GM12878 (cell line): ENCODE measurements at regions of chr20 and their contacts with region 1.

Region 1: GRCh38 chr20:41038878-41039404 is 10.3 kb downstream of the TOP1 start:
- DNase-seq: no peak
- ATAC-seq: peak; percentile 90
- H3K4me3 ChIP-seq: no peak overlapping the region
- H3K27ac ChIP-seq: 0 out of 2 replicates have a peak overlapping the region, but pooled peaks have one; percentile 23
- H3K4me1 ChIP-seq: no peaks in the 10 kb centered on the region
- H3K27me3 ChIP-seq: no peaks in the 10 kb centered on the region
- CTCF ChIP-seq: no peak
- EP300 ChIP-seq: peak; percentile 31 to 77; a peak in 3 of 4 replicates
- POLR2A ChIP-seq: no peak
- RAD21 ChIP-seq: no peak

Region 2: DNA sequence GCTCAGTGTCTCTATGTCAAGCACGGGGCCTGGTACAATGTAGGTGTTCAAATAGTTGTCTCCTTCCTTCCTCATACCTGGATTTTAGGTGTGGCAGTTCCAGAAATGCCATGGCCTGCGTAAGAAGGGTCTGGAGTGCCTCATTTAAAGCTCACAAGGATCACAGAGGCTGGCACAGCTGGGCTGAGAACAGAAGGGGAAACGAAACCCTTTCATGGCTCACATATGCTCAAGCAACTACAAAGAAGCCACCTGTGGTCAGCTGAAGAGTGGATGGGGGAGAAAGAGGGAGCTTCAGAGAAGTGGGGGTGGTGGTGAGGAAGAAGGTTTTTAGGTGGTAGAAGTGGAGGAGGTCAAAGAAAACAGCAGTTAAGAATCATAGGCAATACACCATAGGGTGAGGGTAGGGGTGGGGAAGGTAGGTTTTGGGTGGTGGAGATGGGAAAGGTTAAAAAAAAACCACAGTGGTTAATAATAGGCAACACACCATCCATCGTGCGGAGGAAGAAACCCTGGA is 27.3 kb before region 1 on chr20:
- CTCF ChIA-PET with region 1: interaction called, 9 read pairs
- POLR2A ChIA-PET with region 1: interaction called, 9 read pairs
- RAD21 ChIA-PET with region 1: interaction called, 10 read pairs
- SMC1A ChIA-PET with region 1: interaction called, 104 read pairs
- in situ Hi-C with region 1: no loop called
- intact Hi-C with region 1: no loop called
- DNase-seq: peak; percentile 95
- ATAC-seq: peak; percentile 95
- H3K4me3 ChIP-seq: peak overlapping the region; percentile 38
- H3K27ac ChIP-seq: peak overlapping the region; percentile 91
- H3K4me1 ChIP-seq: peaks cover 44% of the 10 kb centered on the region
- H3K27me3 ChIP-seq: no peaks in the 10 kb centered on the region
- CTCF ChIP-seq: no peak
- EP300 ChIP-seq: peak; percentile 83 to 88
- POLR2A ChIP-seq: no peak
- RAD21 ChIP-seq: peak; percentile 30; the same call in 1 of the 2 replicates

Region 3: DNA sequence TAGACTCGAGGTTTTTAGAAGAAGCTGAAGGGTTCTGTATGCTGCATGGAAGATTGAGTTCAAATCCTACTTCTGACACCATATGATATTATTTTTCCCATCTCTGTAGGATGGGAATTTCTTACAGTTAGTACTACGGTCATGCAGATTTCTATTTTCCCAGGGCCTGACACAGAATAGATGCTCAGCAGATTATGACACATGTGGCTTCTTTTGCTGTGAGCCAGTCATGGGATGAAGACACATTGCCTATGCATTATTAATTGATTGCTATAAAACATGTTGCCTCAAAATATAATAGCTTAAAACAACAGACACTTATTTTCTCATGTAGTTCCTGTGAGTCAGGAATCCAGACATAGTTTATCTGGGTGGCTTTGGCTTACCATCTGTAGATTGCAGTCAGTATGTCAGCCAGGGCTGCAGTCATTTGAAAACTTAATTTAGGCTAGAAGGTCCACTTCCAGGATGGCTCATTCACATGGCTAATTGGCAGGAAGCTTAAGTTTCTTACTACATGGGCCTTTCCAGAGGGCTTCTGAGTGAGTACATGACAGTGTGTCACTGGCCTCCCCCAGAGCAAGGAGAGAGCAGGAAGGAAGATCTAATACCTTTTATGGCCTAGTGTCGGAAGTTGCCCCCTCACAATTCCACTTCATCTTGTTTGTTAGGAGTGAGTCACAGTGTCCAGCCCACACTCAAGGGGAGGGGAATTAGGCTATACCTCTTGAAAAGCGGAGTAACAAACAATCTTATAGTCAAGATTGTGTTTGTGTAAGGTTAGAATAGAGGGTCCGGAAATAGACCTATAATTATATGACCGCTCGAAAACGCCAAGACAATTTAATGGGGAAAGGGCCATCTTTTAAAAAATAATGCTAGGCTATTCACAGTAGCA is 19.3 kb after region 1 on chr20:
- CTCF ChIA-PET with region 1: interaction called, 53 read pairs
- POLR2A ChIA-PET with region 1: interaction called, 66 read pairs
- RAD21 ChIA-PET with region 1: interaction called, 14 read pairs
- SMC1A ChIA-PET with region 1: interaction called, 86 read pairs
- in situ Hi-C with region 1: no loop called
- intact Hi-C with region 1: no loop called
- DNase-seq: no peak
- ATAC-seq: peak; percentile 76
- H3K4me3 ChIP-seq: no peak overlapping the region
- H3K27ac ChIP-seq: no peak overlapping the region
- H3K4me1 ChIP-seq: peaks cover 8% of the 10 kb centered on the region
- H3K27me3 ChIP-seq: no peaks in the 10 kb centered on the region
- CTCF ChIP-seq: no peak
- EP300 ChIP-seq: no peak
- POLR2A ChIP-seq: no peak
- RAD21 ChIP-seq: no peak

Region 4: DNA sequence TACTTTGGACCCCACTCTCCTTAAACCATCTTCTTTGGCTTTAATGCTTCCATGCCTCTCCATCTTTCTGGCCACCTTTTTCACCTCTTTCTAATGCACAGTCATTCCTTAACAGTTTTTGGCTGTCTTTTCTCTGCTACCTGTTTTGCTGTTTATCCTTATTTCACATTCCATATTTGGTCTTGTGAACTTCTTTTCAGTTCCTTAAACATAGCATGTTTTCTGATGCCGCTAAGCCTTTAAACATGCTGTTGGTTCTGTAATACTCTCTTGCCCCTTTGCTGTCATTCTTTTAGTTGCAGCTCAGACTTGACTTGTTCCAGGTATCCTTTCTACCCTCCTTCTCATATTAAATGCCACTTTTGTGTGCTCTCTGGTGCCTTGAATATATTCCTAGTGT is 25.4 kb after region 1 on chr20:
- CTCF ChIA-PET with region 1: interaction called, 32 read pairs
- POLR2A ChIA-PET with region 1: interaction called, 6 read pairs
- RAD21 ChIA-PET with region 1: interaction called, 14 read pairs
- SMC1A ChIA-PET with region 1: interaction called, 37 read pairs
- in situ Hi-C with region 1: no loop called
- intact Hi-C with region 1: no loop called
- DNase-seq: peak; percentile 68
- ATAC-seq: peak; percentile 93
- H3K4me3 ChIP-seq: no peak overlapping the region
- H3K27ac ChIP-seq: peak overlapping the region; percentile 62
- H3K4me1 ChIP-seq: peaks cover 20% of the 10 kb centered on the region
- H3K27me3 ChIP-seq: no peaks in the 10 kb centered on the region
- CTCF ChIP-seq: peak; percentile 8 to 59 (median 36); a peak in 3 of 6 replicates
- EP300 ChIP-seq: no peak; a peak in 1 of 4 replicates
- POLR2A ChIP-seq: no peak
- RAD21 ChIP-seq: peak; percentile 77